ENCODE measurements at regions of chr16 and their contacts with region 1.

Region 1: GRCh38 chr16:83533193-83533592 is 274.6 kb upstream of the HSBP1 start:
- DNase-seq: no peak
- H3K4me3 ChIP-seq: no peak overlapping the region
- H3K27ac ChIP-seq: no peak overlapping the region
- H3K4me1 ChIP-seq: no peaks in the 10 kb centered on the region
- H3K27me3 ChIP-seq: no peaks in the 10 kb centered on the region
- CTCF ChIP-seq: no peak
- POLR2A ChIP-seq: no peak

Region 2: DNA sequence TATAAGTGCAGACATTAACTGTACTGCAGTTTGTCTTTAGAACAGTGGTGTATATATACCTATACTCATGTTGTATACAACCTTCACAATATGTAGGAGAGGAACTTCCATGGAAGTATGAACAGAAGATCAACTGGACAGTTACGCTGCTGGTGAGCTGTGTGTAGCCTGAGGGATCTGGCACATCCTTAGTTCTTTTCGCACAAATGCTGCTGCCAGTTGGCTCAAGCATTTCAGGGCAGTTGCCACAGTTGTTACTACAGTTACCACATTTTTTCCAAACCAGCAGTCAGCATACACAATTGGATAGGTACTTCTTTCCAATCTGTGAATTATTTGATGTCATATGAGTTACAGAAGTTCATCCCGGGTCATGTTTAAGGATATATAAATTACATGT is 265.0 kb before region 1 on chr16:
- intact Hi-C with region 1: loop called (anchors 5 kb)
- DNase-seq: no peak
- H3K4me3 ChIP-seq: no peak overlapping the region
- H3K27ac ChIP-seq: no peak overlapping the region
- H3K4me1 ChIP-seq: no peaks in the 10 kb centered on the region
- H3K27me3 ChIP-seq: peaks cover 0 to 8% of the 10 kb centered on the region in 2 donors
- CTCF ChIP-seq: no peak
- POLR2A ChIP-seq: no peak

Region 3: GRCh38 chr16:83501481-83501880 is 31.7 kb before region 1 on chr16:
- intact Hi-C with region 1: no loop called
- DNase-seq: no peak
- H3K4me3 ChIP-seq: no peak overlapping the region
- H3K27ac ChIP-seq: no peak overlapping the region
- H3K4me1 ChIP-seq: no peaks in the 10 kb centered on the region
- H3K27me3 ChIP-seq: no peaks in the 10 kb centered on the region
- CTCF ChIP-seq: no peak
- POLR2A ChIP-seq: no peak

Measured in breast epithelium (tissue), 4 donors.